Natural killer cell (primary cell): ENCODE measurements at regions of chr19 and their contacts with region 1.

Region 1: DNA sequence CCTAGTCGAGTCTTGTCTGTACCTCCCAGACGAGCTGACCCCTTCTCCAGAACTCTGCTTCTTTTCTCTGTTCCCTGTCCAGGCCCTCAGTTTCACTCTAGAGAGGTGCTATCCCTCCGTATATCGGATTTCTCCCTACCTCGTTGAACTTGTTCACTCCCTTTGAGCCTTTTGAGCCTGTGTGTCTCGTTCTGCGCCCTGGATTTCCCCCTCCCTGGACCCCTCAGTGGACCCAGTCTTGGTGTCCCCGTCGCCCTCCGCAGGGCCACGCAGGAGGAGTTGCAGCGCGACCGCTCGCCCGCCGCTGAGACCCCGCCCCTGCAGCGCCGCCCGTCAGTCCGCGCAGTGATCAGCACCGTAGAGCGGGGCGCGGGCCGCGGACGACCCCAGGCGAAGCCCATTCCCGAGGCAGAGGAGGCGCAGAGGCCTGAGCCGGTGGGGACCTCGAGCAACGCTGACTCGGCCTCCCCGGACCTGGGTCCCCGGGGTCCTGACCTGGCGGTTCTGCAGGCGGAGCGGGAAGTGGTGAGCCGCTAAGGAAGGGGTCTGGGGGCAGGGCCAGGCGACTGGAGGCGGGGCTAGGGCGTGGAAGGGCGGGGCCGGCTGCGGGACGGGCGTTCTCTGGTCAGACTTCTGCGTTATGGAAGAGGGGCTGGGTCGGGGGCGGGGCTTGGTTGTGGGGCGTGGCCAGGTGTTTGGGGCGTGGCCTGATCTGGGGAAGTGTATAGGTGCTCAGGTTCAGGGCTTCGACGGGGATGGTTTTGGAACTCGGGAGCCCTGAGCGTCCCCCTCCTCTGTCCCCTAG is 5.5 kb downstream of the EPS8L1 start:
- DNase-seq: peak; percentile 91 to 94
- ATAC-seq: peak; percentile 80 to 93 (median 83)
- H3K4me3 ChIP-seq: peak overlapping the region; percentile 57
- H3K4me3 Mint-ChIP-seq: peak overlapping the region; percentile 89
- H3K27ac ChIP-seq: peak overlapping the region; percentile 49
- H3K27ac Mint-ChIP-seq: peak overlapping the region; percentile 80 to 91
- H3K4me1 ChIP-seq: peaks cover 35% of the 10 kb centered on the region
- H3K4me1 Mint-ChIP-seq: peaks cover 22 to 37% of the 10 kb centered on the region in 2 donors
- H3K27me3 ChIP-seq: peaks cover 21% of the 10 kb centered on the region
- H3K27me3 Mint-ChIP-seq: peaks cover 0 to 19% of the 10 kb centered on the region in 2 donors
- CTCF ChIP-seq: no peak

Region 2: DNA sequence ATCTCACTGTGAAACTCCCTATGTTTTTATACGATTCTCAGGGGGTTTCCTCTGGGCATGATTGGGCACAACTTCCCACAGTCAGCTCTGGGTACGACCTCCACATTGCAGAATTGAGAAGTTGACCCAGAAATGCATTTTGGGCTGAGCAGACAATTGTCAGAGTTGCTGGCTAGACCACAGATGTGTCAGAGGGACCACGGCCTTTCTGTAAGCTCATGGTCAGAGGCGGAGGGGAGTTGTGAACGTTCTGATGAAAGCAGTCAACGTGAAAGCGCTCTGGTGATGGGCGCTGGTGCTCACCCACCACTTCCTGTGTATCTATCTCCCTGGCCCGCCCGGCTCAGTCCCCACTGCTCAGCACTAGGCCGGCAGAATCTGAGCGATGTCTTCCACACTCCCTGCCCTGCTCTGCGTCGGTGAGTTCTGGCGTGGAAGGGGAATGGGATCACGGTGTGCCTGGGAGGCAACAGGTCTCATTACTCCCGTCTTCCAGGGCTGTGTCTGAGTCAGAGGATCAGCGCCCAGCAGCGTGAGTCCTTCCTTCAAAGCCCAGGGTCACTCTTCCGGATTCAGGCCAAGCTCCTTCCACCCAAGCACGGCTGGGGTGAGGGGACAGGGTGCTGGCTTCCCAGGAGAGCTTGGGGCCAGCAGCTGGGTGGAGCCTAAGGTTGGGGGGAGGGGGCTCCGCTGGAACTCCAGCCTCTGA is 175.2 kb before region 1 on chr19 and contains the start of gene NCR1:
- intact Hi-C with region 1: no loop called
- DNase-seq: peak; percentile 58 to 76
- ATAC-seq: peak; percentile 81 to 92 (median 90)
- H3K4me3 ChIP-seq: peak within 1 kb of the TSS; percentile 80
- H3K4me3 Mint-ChIP-seq: peak within 1 kb of the TSS; percentile 92
- H3K27ac ChIP-seq: peak within 1 kb of the TSS; percentile 94
- H3K27ac Mint-ChIP-seq: peak within 1 kb of the TSS; percentile 94 to 98
- H3K4me1 ChIP-seq: peaks cover 59% of the 10 kb centered on the region
- H3K4me1 Mint-ChIP-seq: peaks cover 51 to 57% of the 10 kb centered on the region in 2 donors
- H3K27me3 ChIP-seq: no peaks in the 10 kb centered on the region
- H3K27me3 Mint-ChIP-seq: no peaks in the 10 kb centered on the region
- CTCF ChIP-seq: no peak
- total RNA-seq, gene NCR1: 213 to 342 (median 244) TPM

Region 3: DNA sequence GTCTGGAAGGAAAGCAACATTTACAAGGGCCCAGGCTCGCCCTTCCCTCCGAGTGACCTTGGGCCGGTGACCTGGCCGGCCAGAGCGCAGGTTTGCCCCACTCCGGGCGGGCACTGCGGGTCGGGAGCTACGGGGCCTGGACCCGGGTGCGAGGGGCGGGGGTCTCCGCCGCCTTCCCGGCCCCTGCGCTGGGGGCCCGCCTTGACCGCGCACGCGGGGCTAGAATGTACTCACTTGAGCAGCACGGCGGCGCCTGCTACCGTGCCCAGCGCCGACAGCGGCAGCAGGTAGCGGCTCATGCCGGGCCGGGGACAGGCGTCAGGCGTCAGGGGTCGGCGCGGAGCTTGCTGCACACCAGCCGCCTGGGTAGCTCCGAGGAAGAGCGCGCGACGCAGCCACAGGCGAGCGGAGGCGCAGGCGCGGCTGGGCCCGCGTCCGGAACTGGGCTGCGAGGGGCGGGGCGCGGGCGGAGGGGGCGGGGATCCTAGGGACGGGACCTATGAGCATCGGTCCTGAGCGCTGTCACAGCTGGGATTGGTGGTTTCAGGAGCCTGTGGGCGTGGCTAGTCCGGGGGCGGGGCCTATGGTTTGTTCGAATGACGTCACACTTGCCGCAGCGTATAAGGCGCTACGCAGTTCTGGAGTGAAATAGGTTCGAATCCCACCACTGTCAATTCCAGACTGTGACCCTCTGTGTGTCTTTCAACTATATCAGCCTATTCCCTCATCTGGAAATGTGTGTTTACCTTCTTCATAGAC is 18.3 kb before region 1 on chr19 and contains the start of gene RDH13:
- intact Hi-C with region 1: loop called (anchors 1 kb)
- DNase-seq: peak; percentile 97 to 99
- ATAC-seq: peak; percentile 98 to 100 (median 98)
- H3K4me3 ChIP-seq: peak within 1 kb of the TSS; percentile 47
- H3K4me3 Mint-ChIP-seq: peak within 1 kb of the TSS; percentile 92
- H3K27ac ChIP-seq: peak within 1 kb of the TSS; percentile 71
- H3K27ac Mint-ChIP-seq: peak within 1 kb of the TSS; percentile 64 to 82
- H3K4me1 ChIP-seq: peaks cover 20% of the 10 kb centered on the region
- H3K4me1 Mint-ChIP-seq: peaks cover 4 to 17% of the 10 kb centered on the region in 2 donors
- H3K27me3 ChIP-seq: peaks cover 2% of the 10 kb centered on the region
- H3K27me3 Mint-ChIP-seq: peaks cover 16 to 18% of the 10 kb centered on the region in 2 donors
- CTCF ChIP-seq: no peak
- total RNA-seq, gene RDH13: 18.2 to 25.3 (median 19.3) TPM

Region 4: GRCh38 chr19:55099533-55100506 is 18.6 kb after region 1 on chr19:
- intact Hi-C with region 1: no loop called
- DNase-seq: no peak
- ATAC-seq: no peak
- H3K4me3 ChIP-seq: no peak overlapping the region
- H3K4me3 Mint-ChIP-seq: no peak overlapping the region
- H3K27ac ChIP-seq: no peak overlapping the region
- H3K27ac Mint-ChIP-seq: no peak overlapping the region
- H3K4me1 ChIP-seq: no peaks in the 10 kb centered on the region
- H3K4me1 Mint-ChIP-seq: peaks cover 0 to 10% of the 10 kb centered on the region in 2 donors
- H3K27me3 ChIP-seq: no peaks in the 10 kb centered on the region
- H3K27me3 Mint-ChIP-seq: no peaks in the 10 kb centered on the region
- CTCF ChIP-seq: no peak

Region 5: GRCh38 chr19:55117636-55118391 is 36.6 kb after region 1 on chr19 and contains the start of gene PPP1R12C:
- intact Hi-C with region 1: loop called (anchors 5 kb)
- DNase-seq: peak; percentile 93 to 98
- ATAC-seq: peak; percentile 90 to 98 (median 93)
- H3K4me3 ChIP-seq: peak within 1 kb of the TSS; percentile 69
- H3K4me3 Mint-ChIP-seq: peak within 1 kb of the TSS; percentile 97
- H3K27ac ChIP-seq: peak within 1 kb of the TSS; percentile 45
- H3K27ac Mint-ChIP-seq: peak within 1 kb of the TSS; percentile 89 to 98
- H3K4me1 ChIP-seq: peaks cover 50% of the 10 kb centered on the region
- H3K4me1 Mint-ChIP-seq: peaks cover 36 to 49% of the 10 kb centered on the region in 2 donors
- H3K27me3 ChIP-seq: no peaks in the 10 kb centered on the region
- H3K27me3 Mint-ChIP-seq: peaks cover under 1 to 6% of the 10 kb centered on the region in 2 donors
- CTCF ChIP-seq: no peak
- total RNA-seq, gene PPP1R12C: 162 to 178 (median 174) TPM